ENCODE measurements at regions of chr13 and their contacts with region 1.

Region 1: DNA sequence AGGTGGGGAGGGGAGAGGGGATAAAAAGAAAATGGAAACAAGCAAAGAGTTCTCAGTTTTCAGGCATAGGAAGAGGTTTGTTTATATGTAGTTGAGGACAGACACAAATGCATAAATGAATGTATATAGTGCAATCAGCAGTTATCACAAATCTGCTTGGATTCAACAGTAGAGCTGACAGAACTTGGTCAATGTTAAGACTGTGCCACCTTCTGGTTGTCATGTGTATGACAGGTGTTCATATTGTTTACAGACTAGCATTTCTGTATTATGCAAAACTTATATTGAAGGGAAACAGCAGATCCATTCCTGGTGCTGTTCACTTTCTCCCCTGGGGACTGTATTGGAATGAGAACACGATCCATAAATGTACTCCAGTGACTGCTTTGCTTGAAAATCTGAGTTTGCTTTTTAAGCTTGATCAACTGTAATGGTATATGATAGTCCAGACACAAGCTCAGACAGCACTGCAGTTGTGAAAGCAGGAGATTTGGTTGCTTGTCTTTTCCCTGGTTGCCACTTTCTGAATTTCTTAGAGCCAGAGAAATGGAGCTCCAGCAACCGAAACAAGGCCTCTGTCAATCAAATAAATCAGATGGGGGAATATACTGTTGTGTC is 319.5 kb upstream of the OBI1 start:
- DNase-seq: peak; percentile 63
- H3K4me3 Mint-ChIP-seq: no peak overlapping the region
- H3K27ac Mint-ChIP-seq: no peak overlapping the region
- H3K4me1 Mint-ChIP-seq: no peaks in the 10 kb centered on the region
- H3K27me3 Mint-ChIP-seq: peaks cover 10% of the 10 kb centered on the region

Region 2: DNA sequence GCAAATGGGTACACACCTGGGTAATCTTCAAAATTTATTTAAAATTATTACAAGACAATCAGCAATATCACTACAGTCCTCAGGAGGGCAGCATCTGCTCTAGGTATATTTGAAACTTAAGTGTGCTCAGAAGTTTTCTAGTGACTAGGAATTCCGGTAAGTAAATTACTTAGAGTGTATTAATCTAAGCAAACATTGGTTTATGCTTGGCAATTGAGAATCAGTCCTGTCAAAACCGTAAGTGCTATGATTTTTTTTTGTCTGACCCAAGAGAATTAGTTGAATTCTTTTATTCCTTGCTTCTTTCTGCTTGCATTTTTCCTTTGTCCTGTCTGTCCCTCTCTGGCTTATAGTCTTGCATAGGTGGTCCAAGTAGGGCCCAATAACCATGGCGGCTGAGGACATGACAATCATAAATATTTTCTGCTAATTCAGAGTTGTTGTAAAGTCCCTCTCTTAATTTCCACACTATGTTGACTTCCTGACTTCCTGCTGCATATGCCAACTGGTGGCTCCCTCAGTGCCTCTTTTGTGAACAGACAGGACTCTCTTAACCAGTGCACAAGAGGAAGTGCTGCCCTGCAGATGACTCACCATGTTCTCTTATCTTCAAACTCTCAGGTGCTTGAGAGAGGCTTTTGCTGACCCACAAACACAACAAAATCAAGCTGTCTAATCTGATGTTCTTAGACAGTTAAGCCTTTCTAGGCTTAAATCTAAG is 1198.8 kb before region 1 on chr13:
- CTCF ChIA-PET with region 1: no interaction called
- intact Hi-C with region 1: loop called (anchors 5 kb)
- DNase-seq: peak; percentile 61
- H3K4me3 Mint-ChIP-seq: no peak overlapping the region
- H3K27ac Mint-ChIP-seq: peak overlapping the region; percentile 57
- H3K4me1 Mint-ChIP-seq: peaks cover 12% of the 10 kb centered on the region
- H3K27me3 Mint-ChIP-seq: peaks cover 10% of the 10 kb centered on the region

Region 3: DNA sequence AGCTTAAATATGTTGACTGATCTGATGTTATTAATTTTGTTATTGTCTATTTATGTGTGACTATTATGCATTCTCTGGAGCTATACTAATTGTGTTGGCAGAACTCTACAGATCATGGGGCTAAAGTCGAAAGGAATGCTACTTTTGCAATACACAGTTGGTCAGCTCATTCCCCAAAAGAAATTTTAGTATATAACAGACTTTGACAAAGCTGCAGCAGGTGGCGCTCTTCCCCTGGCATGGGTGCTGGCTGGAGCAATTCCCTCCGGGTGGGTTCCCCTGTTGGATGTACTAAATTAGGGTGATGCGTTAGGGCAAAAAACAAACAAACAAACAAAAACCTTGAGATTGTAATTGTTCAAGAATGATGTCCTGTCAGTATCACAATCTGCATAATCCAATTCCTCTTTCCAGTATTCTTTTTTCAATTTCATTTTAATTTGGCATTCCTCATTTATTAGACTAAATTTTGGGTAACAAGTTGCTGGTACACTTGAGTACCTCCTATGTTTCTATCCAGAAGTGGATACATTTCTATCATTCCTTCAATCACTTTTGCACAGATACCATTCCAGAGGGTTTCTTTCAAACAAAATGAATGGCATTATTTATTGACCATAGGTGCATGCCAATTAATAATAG is 737.1 kb before region 1 on chr13:
- CTCF ChIA-PET with region 1: interaction called, 12 read pairs
- intact Hi-C with region 1: loop called (anchors 1 kb)
- DNase-seq: peak; percentile 45
- H3K4me3 Mint-ChIP-seq: no peak overlapping the region
- H3K27ac Mint-ChIP-seq: no peak overlapping the region
- H3K4me1 Mint-ChIP-seq: no peaks in the 10 kb centered on the region
- H3K27me3 Mint-ChIP-seq: no peaks in the 10 kb centered on the region

Region 4: DNA sequence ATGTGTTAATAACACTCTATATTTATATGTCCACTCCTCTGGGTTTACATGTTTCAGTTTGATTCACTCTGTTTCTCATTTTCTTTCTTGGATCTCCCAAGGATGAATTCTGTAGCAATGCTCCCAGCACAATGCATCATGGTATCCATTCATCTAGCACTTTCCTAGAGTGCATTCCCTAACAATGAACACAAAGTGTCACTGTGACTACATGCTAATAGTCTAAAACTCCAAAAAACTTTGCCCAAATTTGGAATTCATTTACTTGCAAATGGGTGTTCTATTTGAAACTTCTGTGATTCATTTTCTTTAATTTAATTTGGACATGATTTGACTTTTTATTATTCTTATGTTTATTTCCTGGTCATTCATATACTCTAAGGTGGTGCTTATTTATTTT is 661.5 kb before region 1 on chr13:
- CTCF ChIA-PET with region 1: no interaction called
- intact Hi-C with region 1: loop called (anchors 5 kb)
- DNase-seq: no peak
- H3K4me3 Mint-ChIP-seq: no peak overlapping the region
- H3K27ac Mint-ChIP-seq: no peak overlapping the region
- H3K4me1 Mint-ChIP-seq: no peaks in the 10 kb centered on the region
- H3K27me3 Mint-ChIP-seq: peaks cover 3% of the 10 kb centered on the region

Region 5: GRCh38 chr13:79246578-79246949 is 268.1 kb after region 1 on chr13:
- CTCF ChIA-PET with region 1: no interaction called
- intact Hi-C with region 1: loop called (anchors 5 kb)
- DNase-seq: no peak
- H3K4me3 Mint-ChIP-seq: no peak overlapping the region
- H3K27ac Mint-ChIP-seq: no peak overlapping the region
- H3K4me1 Mint-ChIP-seq: no peaks in the 10 kb centered on the region
- H3K27me3 Mint-ChIP-seq: peaks cover 3% of the 10 kb centered on the region